ENCODE measurements at regions of chrX and their contacts with region 1.

Region 1: DNA sequence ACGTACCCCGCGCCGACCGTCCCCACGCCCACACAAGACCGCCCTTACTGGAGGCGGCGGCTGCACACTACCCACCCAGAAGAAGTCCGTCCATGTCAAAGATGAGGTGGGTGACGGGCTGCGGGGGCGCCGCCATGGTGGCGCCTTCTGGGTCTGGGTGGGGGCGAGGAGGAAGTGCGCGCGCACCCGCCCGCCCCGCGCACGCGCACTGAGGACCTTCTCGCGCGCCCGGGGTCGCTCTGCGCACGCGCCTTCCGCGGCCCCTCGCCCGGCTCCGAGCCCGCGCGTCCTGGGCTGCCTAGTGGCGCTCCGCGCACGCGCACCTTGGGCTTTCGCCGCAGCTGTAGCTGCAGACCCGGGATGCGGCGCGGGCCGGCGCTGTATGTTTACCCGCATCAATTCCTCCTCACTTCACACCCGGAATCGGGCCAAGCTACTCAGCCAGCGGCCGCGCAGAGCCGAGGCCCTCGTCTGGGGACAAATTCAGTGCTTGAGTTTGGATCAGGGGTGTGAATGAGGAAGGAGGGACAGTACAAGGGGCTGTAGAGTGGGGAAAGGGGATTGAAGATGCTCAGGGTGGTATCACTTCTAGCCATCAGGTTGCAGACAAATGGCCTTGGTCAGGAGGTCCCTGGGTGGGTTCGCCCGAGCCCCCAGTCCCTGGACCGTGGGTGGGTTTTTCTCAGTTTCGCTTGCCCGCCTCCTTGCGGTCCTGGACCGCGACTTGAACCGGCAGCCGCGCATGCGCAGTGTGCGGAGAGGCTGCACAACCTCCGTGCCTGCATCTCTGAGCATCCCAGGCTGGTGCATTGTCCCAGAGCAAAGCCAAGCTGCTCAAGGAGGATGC is at the start of gene PUDP:
- DNase-seq: peak; percentile 86
- H3K4me3 Mint-ChIP-seq: peak within 1 kb of the TSS; percentile 80
- H3K27ac Mint-ChIP-seq: peak within 1 kb of the TSS; percentile 85
- H3K4me1 Mint-ChIP-seq: peaks cover 15% of the 10 kb centered on the region
- H3K27me3 Mint-ChIP-seq: no peaks in the 10 kb centered on the region
- total RNA-seq, gene PUDP: 16.5 to 17.4 TPM

Region 2: GRCh38 chrX:7083468-7084396 is 64.5 kb before region 1 on chrX:
- CTCF ChIA-PET with region 1: no interaction called
- POLR2A ChIA-PET with region 1: no interaction called
- intact Hi-C with region 1: loop called (anchors 1 kb)
- DNase-seq: peak; percentile 69
- H3K4me3 Mint-ChIP-seq: no peak overlapping the region
- H3K27ac Mint-ChIP-seq: peak overlapping the region; percentile 4
- H3K4me1 Mint-ChIP-seq: peaks cover 38% of the 10 kb centered on the region
- H3K27me3 Mint-ChIP-seq: no peaks in the 10 kb centered on the region

Region 3: GRCh38 chrX:7362111-7362510 is 213.9 kb after region 1 on chrX:
- CTCF ChIA-PET with region 1: no interaction called
- POLR2A ChIA-PET with region 1: no interaction called
- intact Hi-C with region 1: no loop called
- DNase-seq: no peak
- H3K4me3 Mint-ChIP-seq: no peak overlapping the region
- H3K27ac Mint-ChIP-seq: no peak overlapping the region
- H3K4me1 Mint-ChIP-seq: no peaks in the 10 kb centered on the region
- H3K27me3 Mint-ChIP-seq: no peaks in the 10 kb centered on the region

Region 4: GRCh38 chrX:7614616-7615015 is 466.4 kb after region 1 on chrX:
- CTCF ChIA-PET with region 1: no interaction called
- POLR2A ChIA-PET with region 1: no interaction called
- intact Hi-C with region 1: no loop called
- DNase-seq: no peak
- H3K4me3 Mint-ChIP-seq: no peak overlapping the region
- H3K27ac Mint-ChIP-seq: no peak overlapping the region
- H3K4me1 Mint-ChIP-seq: no peaks in the 10 kb centered on the region
- H3K27me3 Mint-ChIP-seq: no peaks in the 10 kb centered on the region

Measured in activated CD4-positive, alpha-beta memory T cell treated with anti-CD3 and anti-CD28 coated beads for 36 hours (primary cell).